ENCODE measurements at regions of chr11 and their contacts with region 1.

Region 1: DNA sequence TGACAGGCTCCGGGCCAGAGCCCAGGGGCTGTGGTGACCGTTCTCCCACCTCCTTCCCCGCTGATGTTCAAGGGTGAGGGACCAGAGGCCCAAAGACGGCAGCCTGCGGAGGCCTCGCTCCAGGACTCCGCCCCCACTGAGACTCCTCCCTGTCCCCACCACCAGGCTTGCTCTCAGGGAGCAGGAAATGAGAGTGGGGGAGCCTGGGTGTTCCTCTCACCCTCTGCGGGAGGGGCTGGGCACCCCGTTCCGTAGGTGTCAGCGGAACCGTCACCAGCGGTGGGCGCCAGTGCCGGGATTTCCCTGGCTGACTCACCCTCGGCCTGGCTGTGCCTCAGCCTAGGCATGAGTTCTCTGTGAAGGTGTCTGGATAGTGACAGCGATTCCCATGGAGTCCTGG is 15.7 kb downstream of the DAGLA start:
- DNase-seq: peak; percentile 90
- H3K4me3 Mint-ChIP-seq: peak overlapping the region; percentile 70
- H3K27ac Mint-ChIP-seq: peak overlapping the region; percentile 82
- H3K4me1 Mint-ChIP-seq: peaks cover 25% of the 10 kb centered on the region
- H3K27me3 Mint-ChIP-seq: peaks cover 3% of the 10 kb centered on the region

Region 2: GRCh38 chr11:61679893-61680621 is 15.9 kb before region 1 on chr11 and contains the start of gene DAGLA:
- intact Hi-C with region 1: loop called (anchors 1 kb)
- DNase-seq: peak; percentile 68
- H3K4me3 Mint-ChIP-seq: peak within 1 kb of the TSS; percentile 75
- H3K27ac Mint-ChIP-seq: no peak within 1 kb of the TSS
- H3K4me1 Mint-ChIP-seq: no peaks in the 10 kb centered on the region
- H3K27me3 Mint-ChIP-seq: peaks cover 42% of the 10 kb centered on the region
- total RNA-seq, gene DAGLA: 0.18 and 0.20 TPM in 2 replicates